ENCODE measurements at regions of chr6 and their contacts with region 1.

Region 1: GRCh38 chr6:7910654-7911344 is at the start of gene TXNDC5:
- DNase-seq: peak; percentile 84
- ATAC-seq: peak; percentile 91
- total RNA-seq, gene TXNDC5: 65.3 to 80.7 TPM

Region 2: DNA sequence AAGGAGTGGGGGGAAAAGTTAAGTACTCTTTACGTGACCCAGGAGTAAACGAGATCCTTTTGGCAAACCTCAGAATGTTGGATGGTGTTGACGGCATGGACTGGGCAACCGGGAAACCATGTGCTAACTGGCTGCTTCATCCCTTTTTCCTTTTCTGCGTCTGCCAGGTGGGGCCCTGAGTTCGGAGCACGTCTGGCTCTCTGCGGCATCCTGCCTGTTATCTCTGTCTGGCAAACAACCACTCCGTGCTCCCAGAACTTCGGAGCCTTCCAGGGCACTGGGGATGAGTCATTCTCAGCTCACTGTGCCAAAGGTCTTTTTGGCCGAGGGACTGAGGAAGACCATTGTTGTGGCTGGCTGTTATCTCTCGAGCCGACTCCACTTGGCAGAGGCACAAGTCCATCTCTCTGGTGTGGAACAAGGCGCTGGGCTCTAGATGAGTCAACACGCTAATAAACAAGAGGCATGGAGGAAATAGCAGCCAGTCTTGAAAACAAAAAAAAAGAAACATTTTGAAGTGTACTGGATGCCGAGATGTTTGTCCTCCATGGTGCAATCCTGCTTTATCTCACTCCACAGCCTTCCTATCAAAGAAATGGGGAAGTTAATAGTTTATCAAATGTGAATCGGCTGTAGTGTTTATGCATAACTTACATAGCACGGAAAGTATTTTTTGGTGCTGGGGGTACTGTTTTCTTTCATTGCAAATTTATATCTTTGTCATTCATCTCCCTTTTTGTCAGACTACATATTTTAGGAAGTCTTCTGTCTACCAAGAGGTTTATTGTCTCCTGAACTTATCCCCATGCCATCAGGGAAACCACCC is 64.4 kb after region 1 on chr6:
- intact Hi-C with region 1: loop called in 1 of 2 experiments (anchors 2 kb)
- DNase-seq: peak; percentile 91
- ATAC-seq: peak; percentile 95 to 98

Region 3: DNA sequence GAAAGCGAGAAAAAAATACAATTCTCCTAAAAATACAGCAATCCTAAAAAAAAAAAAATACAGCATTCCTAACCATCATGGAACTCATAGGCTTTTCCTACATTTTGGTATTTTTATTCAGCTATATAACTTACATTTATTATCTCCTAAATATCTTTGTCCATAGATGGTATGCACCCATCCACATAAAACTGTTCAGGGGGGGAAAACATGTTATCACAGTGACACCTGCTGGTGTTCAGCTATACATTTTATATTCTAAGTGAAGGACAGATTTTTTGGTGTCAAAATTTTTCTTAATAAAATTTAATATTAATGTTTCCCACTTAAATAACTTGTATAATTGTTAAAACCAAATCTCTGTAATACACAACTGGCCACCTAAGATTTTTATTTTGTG is 95.4 kb after region 1 on chr6:
- intact Hi-C with region 1: loop called in 1 of 2 experiments (anchors 5 kb)
- DNase-seq: no peak
- ATAC-seq: peak; percentile 44 to 61

Region 4: DNA sequence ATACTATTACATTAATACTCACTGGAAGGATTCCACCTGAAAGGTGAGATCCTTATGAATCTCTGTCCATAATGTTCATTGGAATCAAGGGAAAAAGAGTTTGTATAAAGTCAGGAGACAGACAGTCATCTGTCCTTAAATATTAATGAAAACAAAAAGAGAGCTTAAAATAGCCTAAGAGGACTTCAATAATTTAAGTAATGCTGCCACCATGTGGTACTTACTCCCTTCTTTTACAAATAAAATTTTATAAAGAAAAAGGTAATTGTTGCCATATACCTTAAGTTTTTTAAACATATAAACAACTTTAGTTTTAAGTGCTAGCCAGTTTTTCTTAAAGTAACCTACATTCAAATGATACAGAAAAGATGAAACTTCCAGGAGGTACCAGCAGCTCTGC is 148.3 kb after region 1 on chr6:
- intact Hi-C with region 1: loop called in 1 of 2 experiments (anchors 5 kb)
- DNase-seq: no peak
- ATAC-seq: no peak

Region 5: DNA sequence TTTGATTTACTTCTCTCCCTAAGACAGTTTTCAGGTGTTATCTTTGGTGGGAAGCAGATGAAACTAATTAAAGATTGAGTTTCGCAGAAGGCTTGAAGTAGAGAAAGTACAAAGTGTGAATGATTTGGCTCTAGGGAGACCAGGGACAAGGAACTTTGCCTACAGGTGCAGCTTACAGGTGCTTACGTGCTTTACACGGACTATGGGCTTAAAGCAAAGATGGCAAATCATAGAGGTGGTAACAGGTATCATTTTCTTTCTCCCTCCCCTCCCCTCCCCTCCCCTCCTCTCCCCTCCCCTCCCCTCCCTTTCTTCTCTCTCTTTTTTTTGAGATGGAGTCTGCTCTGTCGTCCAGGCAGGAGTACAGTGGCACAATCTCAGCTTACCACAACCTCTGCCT is 388.2 kb after region 1 on chr6:
- intact Hi-C with region 1: no loop called
- DNase-seq: no peak
- ATAC-seq: no peak